Activated CD4-positive, alpha-beta T cell treated with anti-CD3 and anti-CD28 coated beads for 36 hours (primary cell): ENCODE measurements at regions of chr1 and their contacts with region 1.

Region 1: GRCh38 chr1:200558866-200559459 is 61.6 kb downstream of the KIF14 start:
- DNase-seq: peak; percentile 24
- ATAC-seq: peak; percentile 60
- H3K4me3 Mint-ChIP-seq: no peak overlapping the region
- H3K27ac Mint-ChIP-seq: no peak overlapping the region
- H3K4me1 Mint-ChIP-seq: peaks cover 10% of the 10 kb centered on the region
- H3K27me3 Mint-ChIP-seq: no peaks in the 10 kb centered on the region

Region 2: GRCh38 chr1:198575798-198576641 is 1982.9 kb before region 1 on chr1:
- CTCF ChIA-PET with region 1: no interaction called
- POLR2A ChIA-PET with region 1: no interaction called
- intact Hi-C with region 1: loop called in 1 of 2 experiments (anchors 5 kb)
- DNase-seq: no peak
- ATAC-seq: no peak
- H3K4me3 Mint-ChIP-seq: no peak overlapping the region
- H3K27ac Mint-ChIP-seq: no peak overlapping the region
- H3K4me1 Mint-ChIP-seq: peaks cover 14% of the 10 kb centered on the region
- H3K27me3 Mint-ChIP-seq: no peaks in the 10 kb centered on the region

Region 3: GRCh38 chr1:199859491-199859933 is 699.5 kb before region 1 on chr1:
- CTCF ChIA-PET with region 1: no interaction called
- POLR2A ChIA-PET with region 1: no interaction called
- intact Hi-C with region 1: no loop called
- DNase-seq: no peak
- ATAC-seq: peak; percentile 49
- H3K4me3 Mint-ChIP-seq: no peak overlapping the region
- H3K27ac Mint-ChIP-seq: no peak overlapping the region
- H3K4me1 Mint-ChIP-seq: peaks cover 8% of the 10 kb centered on the region
- H3K27me3 Mint-ChIP-seq: peaks cover 11% of the 10 kb centered on the region

Region 4: DNA sequence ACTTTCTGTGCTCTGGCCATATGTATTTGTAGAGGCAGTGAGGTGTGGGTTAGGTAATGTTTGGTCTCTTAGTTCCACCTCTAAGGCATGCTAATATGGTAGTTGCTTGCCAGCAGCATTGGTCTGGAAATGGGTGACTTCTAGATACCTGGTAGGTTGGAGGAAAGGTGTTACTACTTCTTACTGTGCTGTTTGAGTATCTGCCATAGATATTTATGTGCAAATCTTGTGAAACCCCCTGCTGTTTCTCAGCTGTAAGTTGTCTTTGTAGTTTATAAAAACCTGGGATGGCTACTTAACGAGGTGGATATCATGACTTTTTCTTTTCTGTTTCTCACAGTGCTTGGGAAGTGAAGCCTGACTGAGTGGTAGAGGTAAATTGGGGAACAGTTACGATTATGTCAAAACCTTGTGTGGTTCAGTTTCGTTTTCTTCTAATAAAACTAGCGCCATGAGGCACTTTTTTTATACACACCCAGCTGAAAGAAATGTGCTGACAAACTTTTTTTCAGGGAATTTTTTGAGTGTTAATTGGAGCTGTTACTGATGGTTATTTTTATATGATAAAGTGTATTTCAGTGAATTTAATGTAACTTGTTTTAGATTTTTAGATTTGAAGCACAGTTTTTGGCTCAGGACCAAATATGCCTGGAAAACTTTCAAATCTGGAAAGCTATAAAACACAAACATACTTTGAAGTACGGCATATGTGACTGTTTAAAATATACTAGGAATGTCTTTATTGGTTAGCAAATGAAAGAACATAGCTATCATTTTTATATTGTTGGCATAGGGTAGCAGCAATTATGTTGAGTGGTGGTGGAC is 221.8 kb after region 1 on chr1:
- CTCF ChIA-PET with region 1: no interaction called
- POLR2A ChIA-PET with region 1: no interaction called
- intact Hi-C with region 1: no loop called
- DNase-seq: no peak
- ATAC-seq: no peak
- H3K4me3 Mint-ChIP-seq: no peak overlapping the region
- H3K27ac Mint-ChIP-seq: peak overlapping the region; percentile 21
- H3K4me1 Mint-ChIP-seq: peaks cover 3% of the 10 kb centered on the region
- H3K27me3 Mint-ChIP-seq: no peaks in the 10 kb centered on the region

Region 5: GRCh38 chr1:200802865-200803512 is 244.0 kb after region 1 on chr1:
- CTCF ChIA-PET with region 1: interaction called, 12 read pairs
- POLR2A ChIA-PET with region 1: no interaction called
- intact Hi-C with region 1: loop called (anchors 1 kb)
- DNase-seq: peak; percentile 86
- ATAC-seq: peak; percentile 88
- H3K4me3 Mint-ChIP-seq: no peak overlapping the region
- H3K27ac Mint-ChIP-seq: no peak overlapping the region
- H3K4me1 Mint-ChIP-seq: peaks cover 2% of the 10 kb centered on the region
- H3K27me3 Mint-ChIP-seq: no peaks in the 10 kb centered on the region

Region 6: DNA sequence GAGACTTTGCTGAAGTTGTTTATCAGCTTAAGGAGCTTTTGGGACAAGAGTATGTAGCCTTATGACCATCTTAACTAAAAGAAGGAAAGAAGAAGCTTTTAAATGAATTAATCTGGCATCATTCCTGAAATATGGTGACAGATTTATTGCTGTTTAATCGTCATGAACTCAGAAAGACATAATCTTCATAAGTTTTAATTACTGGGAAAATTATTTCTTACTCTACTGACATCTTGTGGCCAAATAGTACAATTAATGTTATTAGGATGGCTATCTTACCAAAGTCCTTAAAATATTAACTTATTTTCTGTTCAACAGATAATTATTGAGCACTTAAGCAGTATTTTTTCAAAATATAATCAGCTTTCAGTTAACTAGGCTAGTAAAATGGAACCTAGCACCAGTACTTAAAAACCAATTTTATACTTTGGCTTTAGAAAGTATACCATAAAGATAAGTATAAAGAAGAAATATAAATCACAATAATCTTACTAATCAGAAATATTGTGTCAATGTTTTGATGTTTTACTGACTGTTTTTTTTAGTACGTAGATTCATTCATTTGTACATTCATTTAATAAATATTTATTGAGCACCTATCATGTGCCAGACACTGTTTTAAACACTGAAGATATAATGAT is 279.1 kb after region 1 on chr1:
- CTCF ChIA-PET with region 1: interaction called, 4 read pairs
- POLR2A ChIA-PET with region 1: no interaction called
- intact Hi-C with region 1: loop called in 1 of 2 experiments (anchors 2 kb)
- DNase-seq: no peak
- ATAC-seq: no peak
- H3K4me3 Mint-ChIP-seq: no peak overlapping the region
- H3K27ac Mint-ChIP-seq: no peak overlapping the region
- H3K4me1 Mint-ChIP-seq: no peaks in the 10 kb centered on the region
- H3K27me3 Mint-ChIP-seq: no peaks in the 10 kb centered on the region